CD8-positive, alpha-beta memory T cell (primary cell): ENCODE measurements at regions of chr15 and their contacts with region 1.

Region 1: DNA sequence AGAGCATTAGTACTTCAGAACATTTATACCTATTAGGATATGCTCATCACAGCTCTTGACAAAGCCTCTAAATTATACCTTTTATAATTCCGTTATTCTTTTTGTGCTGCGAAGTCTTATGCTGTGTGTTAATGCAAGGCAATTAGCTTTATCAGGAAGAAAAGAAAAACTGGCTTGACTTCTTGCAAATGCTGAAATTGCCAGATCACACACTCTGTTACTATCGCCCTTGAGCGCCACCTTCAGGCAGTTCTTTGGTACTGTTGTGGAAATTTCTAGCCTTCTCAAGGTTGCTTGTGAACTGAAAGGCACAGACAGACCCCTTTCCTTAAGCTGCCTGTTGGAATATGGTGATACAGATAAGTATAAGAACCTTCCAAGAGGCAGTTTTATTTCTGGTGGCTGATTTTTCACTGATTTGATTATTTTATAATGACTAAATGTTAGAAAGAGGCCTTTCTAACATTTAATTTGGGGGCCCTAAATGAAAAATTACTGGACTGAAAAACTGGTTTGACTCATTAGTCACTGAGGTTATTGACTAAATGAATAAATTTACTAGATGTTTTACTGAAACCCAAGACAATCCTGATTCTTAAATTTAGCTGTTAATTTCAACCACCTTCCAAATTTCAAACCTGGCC is 126.2 kb upstream of the RASGRP1 start:
- DNase-seq: peak; percentile 68 to 82 (median 72)
- H3K4me3 ChIP-seq: no peak overlapping the region
- H3K4me3 Mint-ChIP-seq: no peak overlapping the region
- H3K27ac ChIP-seq: no peak overlapping the region
- H3K27ac Mint-ChIP-seq: peak overlapping the region in 2 of 8 donors; percentile 57 to 91
- H3K4me1 ChIP-seq: peaks cover 61% of the 10 kb centered on the region
- H3K4me1 Mint-ChIP-seq: peaks cover 70 to 84% (median 72%) of the 10 kb centered on the region in 3 donors
- H3K27me3 ChIP-seq: no peaks in the 10 kb centered on the region
- H3K27me3 Mint-ChIP-seq: no peaks in the 10 kb centered on the region

Region 2: DNA sequence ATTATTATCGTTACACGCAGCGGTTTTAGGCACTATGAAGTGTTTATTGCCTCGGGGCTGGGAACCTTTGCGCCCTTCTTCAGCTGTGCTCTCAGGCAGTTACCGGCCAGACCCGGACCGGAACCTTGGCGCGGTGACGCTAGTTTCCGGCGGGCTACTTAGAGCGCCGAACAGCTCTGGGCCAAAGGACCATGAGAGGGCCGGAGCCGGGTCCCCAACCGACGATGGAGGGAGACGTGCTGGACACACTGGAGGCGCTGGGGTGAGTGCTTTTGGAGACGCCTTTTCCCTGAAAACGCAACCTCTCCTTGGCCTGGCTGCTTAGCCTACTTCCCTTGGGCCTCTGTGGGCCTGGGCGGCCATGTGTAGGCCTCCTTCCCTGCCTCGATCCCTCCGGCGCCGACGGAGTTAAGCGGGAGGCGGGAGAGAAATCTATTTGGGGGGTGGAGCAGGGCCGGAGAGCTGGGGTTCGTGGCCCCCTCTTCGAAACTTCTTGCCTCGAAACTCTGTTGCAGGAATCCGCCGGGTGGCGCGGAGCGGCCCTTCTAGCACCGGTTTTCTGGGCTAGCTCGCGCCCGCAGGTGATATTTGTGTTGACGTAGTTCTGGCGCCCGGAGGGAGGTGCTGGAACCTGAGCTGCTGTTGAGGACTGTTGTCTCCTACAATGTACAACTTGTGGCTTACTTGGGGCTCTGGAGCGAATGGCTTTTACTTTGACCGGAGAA is 236.7 kb before region 1 on chr15 and contains the start of gene FAM98B:
- CTCF ChIA-PET with region 1: interaction called, 17 read pairs
- POLR2A ChIA-PET with region 1: interaction called, 7 read pairs
- DNase-seq: peak; percentile 68 to 87 (median 80)
- H3K4me3 ChIP-seq: peak within 1 kb of the TSS; percentile 66
- H3K4me3 Mint-ChIP-seq: peak within 1 kb of the TSS; percentile 94 to 99 (median 97)
- H3K27ac ChIP-seq: peak within 1 kb of the TSS; percentile 89
- H3K27ac Mint-ChIP-seq: peak within 1 kb of the TSS; percentile 91 to 98 (median 96)
- H3K4me1 ChIP-seq: peaks cover 17% of the 10 kb centered on the region
- H3K4me1 Mint-ChIP-seq: peaks cover 33 to 45% (median 36%) of the 10 kb centered on the region in 3 donors
- H3K27me3 ChIP-seq: no peaks in the 10 kb centered on the region
- H3K27me3 Mint-ChIP-seq: peaks cover 0 to 3% of the 10 kb centered on the region in 2 donors
- total RNA-seq, gene FAM98B: 56.7 to 60.9 TPM

Region 3: GRCh38 chr15:38479266-38479665 is 211.5 kb before region 1 on chr15:
- CTCF ChIA-PET with region 1: interaction called, 31 read pairs
- POLR2A ChIA-PET with region 1: interaction called, 3 read pairs
- DNase-seq: no peak
- H3K4me3 ChIP-seq: no peak overlapping the region
- H3K4me3 Mint-ChIP-seq: no peak overlapping the region
- H3K27ac ChIP-seq: no peak overlapping the region
- H3K27ac Mint-ChIP-seq: peak overlapping the region in 2 of 8 donors; percentile 26 to 27
- H3K4me1 ChIP-seq: peaks cover 26% of the 10 kb centered on the region
- H3K4me1 Mint-ChIP-seq: peaks cover 35 to 42% (median 39%) of the 10 kb centered on the region in 3 donors
- H3K27me3 ChIP-seq: no peaks in the 10 kb centered on the region
- H3K27me3 Mint-ChIP-seq: no peaks in the 10 kb centered on the region

Region 4: GRCh38 chr15:38496151-38496550 is 194.7 kb before region 1 on chr15:
- CTCF ChIA-PET with region 1: interaction called, 10 read pairs
- POLR2A ChIA-PET with region 1: no interaction called
- DNase-seq: no peak
- H3K4me3 ChIP-seq: no peak overlapping the region
- H3K4me3 Mint-ChIP-seq: no peak overlapping the region
- H3K27ac ChIP-seq: no peak overlapping the region
- H3K27ac Mint-ChIP-seq: peak overlapping the region; percentile 61 to 86 (median 68)
- H3K4me1 ChIP-seq: no peaks in the 10 kb centered on the region
- H3K4me1 Mint-ChIP-seq: peaks cover 11 to 35% (median 27%) of the 10 kb centered on the region in 3 donors
- H3K27me3 ChIP-seq: no peaks in the 10 kb centered on the region
- H3K27me3 Mint-ChIP-seq: no peaks in the 10 kb centered on the region

Region 5: DNA sequence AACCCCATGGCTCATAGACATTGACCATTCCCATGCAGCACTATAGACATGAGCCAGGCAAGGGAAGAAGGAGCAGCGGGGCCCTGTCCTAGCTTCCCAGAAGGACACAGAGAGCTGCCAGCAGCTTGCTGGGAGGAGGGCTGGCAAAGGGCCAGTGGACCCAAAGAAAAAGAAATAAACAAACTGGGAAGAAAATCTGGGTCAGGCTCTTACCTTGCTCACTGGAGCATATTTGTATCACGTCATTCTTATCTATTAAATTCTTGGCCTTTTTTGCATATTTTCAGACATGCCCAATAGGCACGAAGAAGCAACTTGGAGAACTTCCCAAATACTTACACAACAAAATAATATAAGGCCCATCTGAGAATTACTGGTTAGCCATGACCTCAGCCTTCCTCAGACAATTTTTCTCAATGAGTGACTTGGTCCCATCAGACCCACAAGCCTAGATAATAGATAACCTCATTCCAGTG is 154.6 kb before region 1 on chr15:
- CTCF ChIA-PET with region 1: interaction called, 13 read pairs
- POLR2A ChIA-PET with region 1: no interaction called
- DNase-seq: no peak
- H3K4me3 ChIP-seq: no peak overlapping the region
- H3K4me3 Mint-ChIP-seq: peak overlapping the region in 4 of 7 donors; percentile 9 to 72 (median 43)
- H3K27ac ChIP-seq: no peak overlapping the region
- H3K27ac Mint-ChIP-seq: peak overlapping the region in 7 of 8 donors; percentile 78 to 95 (median 88)
- H3K4me1 ChIP-seq: peaks cover 96% of the 10 kb centered on the region
- H3K4me1 Mint-ChIP-seq: peaks cover 97 to 100% (median 100%) of the 10 kb centered on the region in 3 donors
- H3K27me3 ChIP-seq: no peaks in the 10 kb centered on the region
- H3K27me3 Mint-ChIP-seq: no peaks in the 10 kb centered on the region

Region 6: GRCh38 chr15:38647683-38648082 is 43.1 kb before region 1 on chr15:
- CTCF ChIA-PET with region 1: interaction called, 103 read pairs
- POLR2A ChIA-PET with region 1: interaction called, 36 read pairs
- DNase-seq: no peak
- H3K4me3 ChIP-seq: no peak overlapping the region
- H3K4me3 Mint-ChIP-seq: peak overlapping the region in 1 of 7 donors; percentile 12
- H3K27ac ChIP-seq: no peak overlapping the region
- H3K27ac Mint-ChIP-seq: peak overlapping the region; percentile 50 to 87 (median 74)
- H3K4me1 ChIP-seq: peaks cover 80% of the 10 kb centered on the region
- H3K4me1 Mint-ChIP-seq: peaks cover 74 to 86% (median 84%) of the 10 kb centered on the region in 3 donors
- H3K27me3 ChIP-seq: no peaks in the 10 kb centered on the region
- H3K27me3 Mint-ChIP-seq: no peaks in the 10 kb centered on the region

Region 7: GRCh38 chr15:38724827-38725226 is 34.0 kb after region 1 on chr15:
- CTCF ChIA-PET with region 1: no interaction called
- POLR2A ChIA-PET with region 1: no interaction called
- DNase-seq: no peak
- H3K4me3 ChIP-seq: no peak overlapping the region
- H3K4me3 Mint-ChIP-seq: no peak overlapping the region
- H3K27ac ChIP-seq: no peak overlapping the region
- H3K27ac Mint-ChIP-seq: no peak overlapping the region
- H3K4me1 ChIP-seq: no peaks in the 10 kb centered on the region
- H3K4me1 Mint-ChIP-seq: no peaks in the 10 kb centered on the region
- H3K27me3 ChIP-seq: no peaks in the 10 kb centered on the region
- H3K27me3 Mint-ChIP-seq: peaks cover 0 to 3% of the 10 kb centered on the region in 2 donors

Region 8: DNA sequence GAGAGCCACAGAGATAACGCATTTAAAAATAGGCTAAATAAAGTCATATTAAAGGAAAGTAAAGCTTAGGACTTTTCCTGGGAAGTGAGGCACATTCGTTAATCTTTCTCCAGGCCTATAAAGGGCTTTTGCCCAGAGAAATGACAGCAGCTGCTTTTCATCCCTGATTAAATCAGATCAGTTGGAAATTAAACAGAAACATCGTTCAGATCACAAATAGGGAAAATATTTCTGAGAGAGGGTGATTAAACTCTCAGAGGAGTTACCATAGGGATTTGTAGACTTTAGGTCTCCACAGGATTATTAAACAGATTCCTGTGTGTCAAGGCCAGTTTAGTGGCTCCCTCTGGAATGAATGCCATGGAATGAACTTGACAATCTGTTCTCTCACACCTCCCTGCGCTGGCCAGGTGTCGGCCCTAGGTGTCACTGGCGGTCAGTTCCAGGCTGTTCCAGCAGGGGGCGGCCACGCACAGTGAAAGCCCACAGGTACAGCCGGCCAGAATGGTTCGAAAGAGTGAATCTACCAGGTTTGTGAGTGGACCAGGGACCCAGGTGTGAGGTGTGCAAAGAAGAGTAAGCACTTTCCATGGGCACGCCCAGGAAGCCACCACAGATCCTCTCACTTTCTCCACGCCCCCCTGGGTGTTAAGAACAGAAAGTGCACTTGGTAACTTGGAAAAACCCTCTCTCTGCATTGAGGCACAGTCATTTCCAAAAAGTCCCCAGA is 126.8 kb after region 1 on chr15:
- CTCF ChIA-PET with region 1: no interaction called
- POLR2A ChIA-PET with region 1: no interaction called
- DNase-seq: peak; percentile 62 to 83 (median 73)
- H3K4me3 ChIP-seq: no peak overlapping the region
- H3K4me3 Mint-ChIP-seq: peak overlapping the region in 2 of 7 donors; percentile 31 to 59
- H3K27ac ChIP-seq: no peak overlapping the region
- H3K27ac Mint-ChIP-seq: peak overlapping the region in 1 of 8 donors; percentile 17
- H3K4me1 ChIP-seq: no peaks in the 10 kb centered on the region
- H3K4me1 Mint-ChIP-seq: peaks cover 2 to 5% (median 5%) of the 10 kb centered on the region in 3 donors
- H3K27me3 ChIP-seq: no peaks in the 10 kb centered on the region
- H3K27me3 Mint-ChIP-seq: peaks cover 2 to 14% of the 10 kb centered on the region in 2 donors

Region 9: DNA sequence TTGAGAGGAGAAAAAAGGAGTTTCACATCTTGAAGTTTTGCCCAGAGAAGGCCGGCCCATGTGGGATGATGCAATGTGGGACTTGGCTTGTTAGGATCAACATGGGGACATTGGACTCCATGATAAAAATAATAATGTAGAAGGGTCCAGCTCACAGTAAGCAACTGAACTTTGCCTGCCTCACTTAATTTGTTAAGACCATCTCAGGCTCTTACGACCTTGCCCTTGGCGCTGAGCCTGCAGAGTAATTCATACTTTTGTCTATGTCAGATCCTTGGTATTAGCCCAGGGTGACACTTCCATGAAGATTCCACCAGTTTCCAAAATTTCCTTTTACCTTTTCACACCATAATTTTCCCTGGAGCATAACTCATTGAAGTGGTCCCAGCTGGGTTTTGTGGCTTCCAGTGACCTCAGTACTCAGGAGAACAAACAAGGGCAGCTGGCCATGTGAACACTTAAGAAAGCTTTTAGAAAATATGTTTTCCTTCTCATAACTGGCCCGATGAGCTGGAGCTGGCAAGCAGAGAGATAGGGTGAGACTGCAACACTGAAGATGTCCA is 189.2 kb after region 1 on chr15:
- CTCF ChIA-PET with region 1: no interaction called
- POLR2A ChIA-PET with region 1: no interaction called
- DNase-seq: no peak
- H3K4me3 ChIP-seq: no peak overlapping the region
- H3K4me3 Mint-ChIP-seq: no peak overlapping the region
- H3K27ac ChIP-seq: no peak overlapping the region
- H3K27ac Mint-ChIP-seq: no peak overlapping the region
- H3K4me1 ChIP-seq: no peaks in the 10 kb centered on the region
- H3K4me1 Mint-ChIP-seq: peaks cover 0 to 5% (median 4%) of the 10 kb centered on the region in 3 donors
- H3K27me3 ChIP-seq: no peaks in the 10 kb centered on the region
- H3K27me3 Mint-ChIP-seq: peaks cover 0 to 10% of the 10 kb centered on the region in 2 donors